ENCODE measurements at regions of chr1 and their contacts with region 1.

Region 1: DNA sequence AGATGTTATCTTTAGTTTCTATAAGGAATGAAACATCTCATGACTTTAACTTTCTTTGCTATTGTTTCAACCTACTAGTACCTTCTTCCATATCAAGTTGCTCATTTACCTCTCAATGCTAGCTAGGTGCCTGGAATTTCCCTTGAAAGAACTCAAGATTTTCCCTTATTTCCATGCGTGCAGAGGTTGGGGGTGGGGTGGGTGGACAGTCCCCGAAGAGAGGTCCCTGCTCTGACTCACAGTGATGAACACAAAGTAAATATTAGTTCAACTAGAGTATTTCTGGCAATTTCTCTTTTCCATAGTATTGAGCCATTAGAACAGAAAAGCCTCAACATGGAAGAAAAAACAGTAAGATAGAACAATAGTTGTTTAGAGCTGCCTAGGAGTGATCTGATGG is 239.0 kb upstream of the ZP4 start:
- DNase-seq: no peak

Region 2: DNA sequence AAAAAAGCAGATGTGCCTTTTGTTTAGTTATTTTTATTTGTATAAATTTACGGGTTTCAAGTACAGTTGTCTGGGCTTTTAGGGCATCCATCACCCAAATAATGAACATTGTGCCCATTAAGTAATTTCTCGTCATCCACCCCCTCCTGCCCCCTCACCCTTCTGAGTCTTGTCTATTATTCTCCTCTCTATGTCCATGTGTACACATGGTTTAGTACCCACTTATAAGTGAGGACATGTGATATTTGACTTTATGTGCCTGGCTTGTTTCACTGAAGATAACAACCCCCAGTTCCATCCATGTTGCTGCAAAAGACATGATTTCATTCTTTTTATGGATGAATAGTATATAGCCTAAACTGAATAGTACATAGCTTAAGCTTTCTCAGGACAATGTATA is 428.1 kb before region 1 on chr1:
- intact Hi-C with region 1: no loop called
- DNase-seq: no peak

Region 3: GRCh38 chr1:238088560-238089290 is 41.0 kb before region 1 on chr1:
- intact Hi-C with region 1: loop called in 1 of 2 experiments (anchors 5 kb)
- DNase-seq: no peak

Region 4: DNA sequence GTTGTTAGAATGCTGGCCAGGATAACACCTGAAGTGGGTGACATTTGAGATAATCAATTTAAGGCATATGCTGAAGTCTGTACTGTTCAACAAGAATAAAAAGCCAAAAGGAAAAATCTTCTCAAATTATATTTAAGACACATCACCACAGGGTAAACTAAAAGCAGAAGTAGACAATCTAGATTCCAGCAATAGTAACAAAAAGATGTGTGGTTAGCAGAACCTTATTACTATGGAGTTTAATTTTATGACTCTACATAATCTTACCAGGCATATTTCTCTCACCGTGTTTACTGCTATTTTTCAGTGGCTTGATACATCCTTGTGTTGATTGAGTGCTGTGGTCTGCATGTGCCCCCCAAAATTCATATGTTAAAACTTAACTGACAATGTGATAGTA is 61.5 kb after region 1 on chr1:
- intact Hi-C with region 1: no loop called
- DNase-seq: no peak

Measured in posterior vena cava (tissue), 2 donors.